H1 (cell line): ENCODE measurements at regions of chr14 and their contacts with region 1.

Region 1: DNA sequence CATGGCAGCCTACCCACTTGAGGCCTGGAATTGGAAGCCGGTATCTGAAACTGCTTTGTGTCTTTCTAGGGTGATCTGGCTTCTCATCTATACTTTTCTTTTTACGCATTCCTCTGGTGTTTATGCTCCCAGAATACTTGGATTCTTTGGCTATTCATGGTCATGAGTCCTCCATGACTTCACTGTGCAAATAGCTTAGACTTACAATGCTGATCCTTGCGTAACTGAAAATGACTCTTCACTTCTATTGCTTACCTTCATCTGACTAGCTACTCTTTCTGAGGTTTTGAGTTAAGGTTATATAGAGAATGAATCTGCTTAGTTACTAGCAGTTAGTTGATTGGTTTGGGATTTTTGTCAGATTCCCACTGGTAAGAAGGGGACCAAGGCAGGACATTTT is 121.7 kb upstream of the NOVA1 start:
- DNase-seq: no peak
- H3K4me3 ChIP-seq: no peak overlapping the region
- H3K27ac ChIP-seq: no peak overlapping the region
- H3K4me1 ChIP-seq: no peaks in the 10 kb centered on the region
- H3K27me3 ChIP-seq: no peaks in the 10 kb centered on the region
- CTCF ChIP-seq: no peak
- EP300 ChIP-seq: no peak
- POLR2A ChIP-seq: no peak
- RAD21 ChIP-seq: no peak

Region 2: DNA sequence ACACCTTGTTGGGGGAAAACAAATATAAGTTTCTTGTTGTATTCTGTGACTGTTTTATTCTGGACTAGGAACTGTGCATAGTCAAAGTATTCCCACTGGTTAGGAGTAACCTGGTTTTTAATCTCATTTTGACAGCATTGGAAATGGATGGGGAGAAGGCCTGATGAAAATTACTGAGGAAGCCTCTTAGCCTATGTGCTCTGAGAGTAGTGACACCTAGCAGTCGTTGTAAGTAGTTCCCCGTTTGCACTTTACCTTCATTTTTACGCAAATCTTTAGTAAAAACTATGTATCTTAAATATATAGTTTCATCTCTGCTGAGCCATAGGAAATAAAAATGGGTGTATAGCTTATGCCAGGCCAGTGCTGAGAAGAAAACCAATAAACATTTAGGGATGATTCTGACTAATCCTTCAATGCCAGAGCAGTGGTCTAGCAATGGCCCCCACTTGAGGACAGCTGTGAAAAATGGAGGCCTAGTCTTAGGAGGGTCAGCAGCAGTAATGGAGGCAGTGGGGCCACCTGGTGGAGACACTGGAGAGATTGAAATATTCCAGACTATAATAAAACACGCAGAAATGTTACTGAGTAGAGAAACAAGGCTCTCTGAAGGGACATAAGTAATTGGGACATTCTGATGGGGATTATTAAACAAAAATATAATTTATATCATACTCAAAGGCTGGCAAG is 11.6 kb after region 1 on chr14:
- CTCF ChIA-PET with region 1: interaction called, 10 read pairs
- POLR2A ChIA-PET with region 1: no interaction called
- DNase-seq: peak; percentile 17 to 59
- H3K4me3 ChIP-seq: no peak overlapping the region
- H3K27ac ChIP-seq: no peak overlapping the region
- H3K4me1 ChIP-seq: no peaks in the 10 kb centered on the region
- H3K27me3 ChIP-seq: no peaks in the 10 kb centered on the region
- CTCF ChIP-seq: peak; percentile 50 to 70 (median 61)
- EP300 ChIP-seq: no peak
- POLR2A ChIP-seq: no peak
- RAD21 ChIP-seq: peak; percentile 78 to 81